ENCODE measurements at regions of chr10 and their contacts with region 1.

Region 1: DNA sequence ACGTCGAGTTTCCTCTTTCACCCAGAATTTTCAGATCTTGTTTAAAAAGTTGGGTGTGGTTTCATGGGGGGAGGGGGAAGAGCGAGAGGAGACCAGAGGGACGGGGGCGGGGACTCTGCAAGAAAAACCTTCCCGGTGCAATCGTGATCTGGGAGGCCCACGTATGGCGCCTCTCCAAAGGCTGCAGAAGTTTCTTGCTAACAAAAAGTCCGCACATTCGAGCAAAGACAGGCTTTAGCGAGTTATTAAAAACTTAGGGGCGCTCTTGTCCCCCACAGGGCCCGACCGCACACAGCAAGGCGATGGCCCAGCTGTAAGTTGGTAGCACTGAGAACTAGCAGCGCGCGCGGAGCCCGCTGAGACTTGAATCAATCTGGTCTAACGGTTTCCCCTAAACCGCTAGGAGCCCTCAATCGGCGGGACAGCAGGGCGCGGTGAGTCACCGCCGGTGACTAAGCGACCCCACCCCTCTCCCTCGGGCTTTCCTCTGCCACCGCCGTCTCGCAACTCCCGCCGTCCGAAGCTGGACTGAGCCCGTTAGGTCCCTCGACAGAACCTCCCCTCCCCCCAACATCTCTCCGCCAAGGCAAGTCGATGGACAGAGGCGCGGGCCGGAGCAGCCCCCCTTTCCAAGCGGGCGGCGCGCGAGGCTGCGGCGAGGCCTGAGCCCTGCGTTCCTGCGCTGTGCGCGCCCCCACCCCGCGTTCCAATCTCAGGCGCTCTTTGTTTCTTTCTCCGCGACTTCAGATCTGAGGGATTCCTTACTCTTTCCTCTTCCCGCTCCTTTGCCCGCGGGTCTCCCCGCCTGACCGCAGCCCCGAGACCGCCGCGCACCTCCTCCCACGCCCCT is at the start of gene VIM:
- DNase-seq: peak; percentile 96
- ATAC-seq: peak; percentile 57
- H3K4me3 ChIP-seq: peak within 1 kb of the TSS; percentile 87
- H3K27ac ChIP-seq: peak within 1 kb of the TSS; percentile 97
- H3K4me1 ChIP-seq: peaks cover 11% of the 10 kb centered on the region
- H3K27me3 ChIP-seq: no peaks in the 10 kb centered on the region
- CTCF ChIP-seq: peak; percentile 14; the same call in 1 of the 2 replicates
- POLR2A ChIP-seq: peak; percentile 68
- RAD21 ChIP-seq: peak; percentile 44; the same call in 1 of the 2 replicates
- total RNA-seq, gene VIM: 6,409 and 6,735 TPM in 2 replicates

Region 2: GRCh38 chr10:16853201-16853600 is 375.1 kb before region 1 on chr10:
- CTCF ChIA-PET with region 1: no interaction called
- POLR2A ChIA-PET with region 1: interaction called, 3 read pairs
- dilution Hi-C with region 1: no loop called
- in situ Hi-C with region 1: no loop called
- intact Hi-C with region 1: loop called (anchors 2 kb)
- DNase-seq: peak; percentile 68
- ATAC-seq: peak; percentile 80
- H3K4me3 ChIP-seq: no peak overlapping the region
- H3K27ac ChIP-seq: no peak overlapping the region
- H3K4me1 ChIP-seq: peaks cover 3% of the 10 kb centered on the region
- H3K27me3 ChIP-seq: no peaks in the 10 kb centered on the region
- CTCF ChIP-seq: peak; percentile 76
- POLR2A ChIP-seq: no peak
- RAD21 ChIP-seq: peak; percentile 82

Region 3: GRCh38 chr10:16965740-16966447 is 262.4 kb before region 1 on chr10:
- CTCF ChIA-PET with region 1: interaction called, 3 read pairs
- POLR2A ChIA-PET with region 1: interaction called, 8 read pairs
- dilution Hi-C with region 1: no loop called
- in situ Hi-C with region 1: no loop called
- intact Hi-C with region 1: loop called (anchors 1 kb)
- DNase-seq: peak; percentile 99
- ATAC-seq: peak; percentile 52
- H3K4me3 ChIP-seq: no peak overlapping the region
- H3K27ac ChIP-seq: peak overlapping the region; percentile 89
- H3K4me1 ChIP-seq: peaks cover 18% of the 10 kb centered on the region
- H3K27me3 ChIP-seq: no peaks in the 10 kb centered on the region
- CTCF ChIP-seq: no peak
- POLR2A ChIP-seq: no peak
- RAD21 ChIP-seq: no peak

Region 4: GRCh38 chr10:17029581-17030271 is 198.6 kb before region 1 on chr10:
- CTCF ChIA-PET with region 1: no interaction called
- POLR2A ChIA-PET with region 1: interaction called, 3 read pairs
- dilution Hi-C with region 1: no loop called
- in situ Hi-C with region 1: loop called (anchors 5 kb)
- intact Hi-C with region 1: no loop called
- DNase-seq: peak; percentile 87
- ATAC-seq: peak; percentile 57
- H3K4me3 ChIP-seq: peak overlapping the region; percentile 13; the same call in 1 of the 2 replicates
- H3K27ac ChIP-seq: peak overlapping the region; percentile 68
- H3K4me1 ChIP-seq: peaks cover 14% of the 10 kb centered on the region
- H3K27me3 ChIP-seq: no peaks in the 10 kb centered on the region
- CTCF ChIP-seq: no peak
- POLR2A ChIP-seq: no peak
- RAD21 ChIP-seq: peak; percentile 22; the same call in 1 of the 2 replicates

Region 5: DNA sequence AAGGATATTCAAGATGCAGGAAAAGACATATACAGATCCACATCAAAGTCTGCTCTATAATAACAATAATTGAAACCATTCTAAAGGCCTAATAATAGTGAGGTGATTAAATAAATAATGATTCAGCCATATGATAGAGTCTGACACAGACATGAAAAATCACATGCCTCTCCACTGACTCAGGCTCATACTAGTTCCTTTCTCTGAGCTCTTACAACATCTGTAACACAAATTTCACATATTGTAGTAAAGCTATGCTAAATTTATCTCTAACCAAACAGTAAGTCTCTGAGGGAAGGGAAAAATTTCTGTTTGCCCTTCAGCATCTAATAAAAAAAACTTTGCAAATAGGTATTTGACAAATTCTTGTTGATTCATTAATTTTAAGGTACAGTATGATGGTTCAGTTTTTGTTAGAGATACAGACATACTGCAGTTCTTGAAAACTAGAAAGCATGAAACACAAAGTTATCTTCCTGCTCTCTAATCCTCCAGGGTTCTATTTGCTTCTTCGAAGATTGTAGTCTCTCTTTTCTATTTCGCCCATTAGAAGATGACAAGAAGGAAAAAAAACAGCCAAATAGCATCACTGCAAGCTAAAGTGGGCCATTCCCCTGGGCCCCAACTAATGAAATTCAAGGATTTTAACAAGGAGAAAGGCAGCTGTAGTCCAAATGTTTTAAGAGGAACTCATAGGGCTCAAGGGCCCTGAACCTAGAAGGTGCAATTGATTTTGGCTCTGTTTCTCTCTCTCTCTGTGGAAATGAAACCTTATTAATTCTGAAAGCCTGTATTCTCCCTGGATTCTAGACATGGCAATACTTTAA is 152.6 kb before region 1 on chr10:
- CTCF ChIA-PET with region 1: no interaction called
- POLR2A ChIA-PET with region 1: interaction called, 3 read pairs
- dilution Hi-C with region 1: no loop called
- in situ Hi-C with region 1: no loop called
- intact Hi-C with region 1: loop called (anchors 5 kb)
- DNase-seq: peak; percentile 96
- ATAC-seq: peak; percentile 88
- H3K4me3 ChIP-seq: no peak overlapping the region
- H3K27ac ChIP-seq: peak overlapping the region; percentile 78
- H3K4me1 ChIP-seq: peaks cover 15% of the 10 kb centered on the region
- H3K27me3 ChIP-seq: no peaks in the 10 kb centered on the region
- CTCF ChIP-seq: no peak
- POLR2A ChIP-seq: no peak
- RAD21 ChIP-seq: 0 out of 2 replicates have a peak, but pooled peaks have one; percentile 10

Region 6: DNA sequence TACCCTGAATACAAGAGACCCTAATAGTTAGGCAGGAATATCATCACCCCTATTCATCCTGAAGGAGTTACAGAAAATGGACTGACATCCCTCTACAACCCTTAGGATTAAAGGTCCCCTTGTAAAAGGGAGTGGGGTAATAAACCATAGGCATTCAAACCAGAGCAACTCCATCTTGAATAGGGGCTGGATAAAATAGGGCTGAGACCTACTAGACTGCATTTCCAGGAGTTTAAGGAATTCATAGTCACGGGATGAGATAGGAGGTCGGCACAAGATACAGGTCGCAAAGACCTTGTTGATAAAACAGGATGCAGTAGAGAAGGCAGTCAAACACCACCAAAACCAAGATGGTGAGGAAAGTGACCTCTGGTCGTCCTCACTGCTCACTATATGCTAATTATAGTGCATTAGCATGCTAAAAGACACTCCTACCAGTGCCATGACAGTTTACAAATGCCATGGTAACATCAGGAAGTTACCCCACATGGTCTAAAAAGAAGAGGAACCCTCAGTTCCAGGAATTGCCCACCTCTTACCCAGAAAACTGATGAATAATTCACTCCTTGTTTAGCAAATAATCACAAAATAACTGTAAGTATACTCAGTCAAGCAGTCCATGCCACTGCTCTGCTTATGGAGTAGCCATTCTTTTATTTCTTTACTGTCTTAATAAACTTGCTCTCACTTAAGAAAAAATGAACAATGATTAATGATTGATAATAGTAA is 135.9 kb before region 1 on chr10:
- CTCF ChIA-PET with region 1: no interaction called
- POLR2A ChIA-PET with region 1: no interaction called
- dilution Hi-C with region 1: no loop called
- in situ Hi-C with region 1: no loop called
- intact Hi-C with region 1: no loop called
- DNase-seq: no peak
- ATAC-seq: no peak
- H3K4me3 ChIP-seq: no peak overlapping the region
- H3K27ac ChIP-seq: no peak overlapping the region
- H3K4me1 ChIP-seq: peaks cover 7% of the 10 kb centered on the region
- H3K27me3 ChIP-seq: no peaks in the 10 kb centered on the region
- CTCF ChIP-seq: no peak
- POLR2A ChIP-seq: no peak
- RAD21 ChIP-seq: no peak

Region 7: DNA sequence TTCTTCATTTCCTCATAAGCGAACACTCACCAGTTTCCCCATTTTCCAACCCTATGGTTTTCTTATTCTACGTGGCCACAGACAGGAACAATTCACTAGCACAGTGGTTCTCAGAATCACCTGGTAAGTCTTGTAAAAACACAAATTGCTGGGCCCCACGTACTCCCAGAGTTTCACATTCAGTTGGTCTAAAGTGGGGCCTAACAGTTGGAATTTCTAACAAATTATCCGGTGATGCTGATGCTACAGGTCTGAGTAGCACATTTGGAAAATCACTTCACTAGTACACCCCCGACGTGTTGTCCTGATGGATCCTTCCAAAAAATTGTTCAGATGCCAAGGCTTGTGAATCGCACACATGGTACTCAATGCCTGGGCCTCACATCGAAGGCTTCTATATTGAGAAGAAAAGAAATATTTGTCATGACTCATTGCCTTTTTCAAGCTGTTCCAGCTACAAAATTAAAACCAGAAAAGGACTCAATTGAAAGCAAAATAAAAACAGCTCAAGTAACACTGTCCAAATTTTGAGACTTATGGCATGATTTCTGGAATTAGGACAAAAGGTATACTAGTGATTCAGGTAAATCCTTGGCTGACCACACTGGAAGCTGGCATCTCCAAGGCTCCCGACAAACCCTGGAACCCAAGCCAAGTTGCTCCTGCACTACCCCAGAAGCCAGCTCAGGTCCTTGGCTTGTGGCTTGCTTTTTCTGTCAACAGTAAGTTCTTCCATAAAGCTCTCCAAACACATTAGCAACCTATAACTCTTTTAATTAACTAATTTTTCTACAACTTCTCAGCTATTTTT is 13.1 kb before region 1 on chr10:
- CTCF ChIA-PET with region 1: interaction called, 8 read pairs
- POLR2A ChIA-PET with region 1: interaction called, 25 read pairs
- dilution Hi-C with region 1: no loop called
- in situ Hi-C with region 1: no loop called
- intact Hi-C with region 1: loop called (anchors 2 kb)
- DNase-seq: peak; percentile 97
- ATAC-seq: peak; percentile 28
- H3K4me3 ChIP-seq: no peak overlapping the region
- H3K27ac ChIP-seq: peak overlapping the region; percentile 93
- H3K4me1 ChIP-seq: peaks cover 25% of the 10 kb centered on the region
- H3K27me3 ChIP-seq: no peaks in the 10 kb centered on the region
- CTCF ChIP-seq: no peak
- POLR2A ChIP-seq: no peak
- RAD21 ChIP-seq: no peak